ENCODE measurements at regions of chr3 and their contacts with region 1.

Region 1: DNA sequence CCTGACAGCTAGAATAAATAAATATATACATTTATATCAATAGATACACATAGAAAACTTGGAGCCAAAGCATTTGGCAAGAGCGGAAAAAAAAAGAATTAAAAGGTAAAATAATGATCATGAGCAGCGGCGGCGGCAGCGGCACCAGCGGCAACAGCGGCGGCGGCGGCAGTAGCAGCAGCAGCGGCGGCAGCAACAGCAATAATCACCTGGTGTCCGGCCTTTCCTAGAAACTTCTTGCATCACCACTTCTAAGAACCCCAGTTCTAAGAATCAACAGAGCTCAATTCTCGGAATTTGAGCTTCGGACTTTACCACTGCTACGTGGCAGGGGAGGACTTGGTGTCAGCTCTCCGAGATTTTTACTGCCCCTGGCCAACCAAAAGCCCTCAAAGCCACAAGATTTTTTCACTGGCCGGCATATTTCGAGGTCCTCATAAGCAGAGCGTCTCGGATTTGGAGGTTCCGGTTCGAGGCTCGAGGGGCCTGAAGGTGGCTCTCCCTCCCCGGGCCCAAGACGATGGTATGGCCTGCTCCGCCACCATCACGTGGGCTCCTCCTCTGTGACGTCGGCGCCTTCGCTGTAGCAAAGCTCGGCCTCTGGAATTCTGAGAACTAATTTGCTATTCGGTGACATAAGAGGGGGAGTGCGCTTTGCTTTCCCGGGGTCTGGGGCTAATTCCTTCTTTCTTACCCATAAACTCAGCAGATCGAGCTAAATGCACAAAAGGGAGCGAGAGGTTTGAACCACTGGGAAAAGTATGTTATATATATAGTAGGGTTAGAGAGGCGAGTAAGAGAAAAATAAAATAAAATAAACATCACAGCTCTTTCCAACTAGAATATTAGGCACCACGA is at the start of gene BCL6:
- DNase-seq: peak; percentile 95
- H3K4me3 ChIP-seq: peak within 1 kb of the TSS; percentile 50 to 88 (median 85)
- H3K27ac ChIP-seq: peak within 1 kb of the TSS; percentile 100
- H3K4me1 ChIP-seq: peaks cover 21% of the 10 kb centered on the region
- H3K27me3 ChIP-seq: no peaks in the 10 kb centered on the region
- CTCF ChIP-seq: no peak
- POLR2A ChIP-seq: peak; percentile 89
- total RNA-seq, gene BCL6: 9.6 and 12.1 TPM in 2 replicates

Region 2: DNA sequence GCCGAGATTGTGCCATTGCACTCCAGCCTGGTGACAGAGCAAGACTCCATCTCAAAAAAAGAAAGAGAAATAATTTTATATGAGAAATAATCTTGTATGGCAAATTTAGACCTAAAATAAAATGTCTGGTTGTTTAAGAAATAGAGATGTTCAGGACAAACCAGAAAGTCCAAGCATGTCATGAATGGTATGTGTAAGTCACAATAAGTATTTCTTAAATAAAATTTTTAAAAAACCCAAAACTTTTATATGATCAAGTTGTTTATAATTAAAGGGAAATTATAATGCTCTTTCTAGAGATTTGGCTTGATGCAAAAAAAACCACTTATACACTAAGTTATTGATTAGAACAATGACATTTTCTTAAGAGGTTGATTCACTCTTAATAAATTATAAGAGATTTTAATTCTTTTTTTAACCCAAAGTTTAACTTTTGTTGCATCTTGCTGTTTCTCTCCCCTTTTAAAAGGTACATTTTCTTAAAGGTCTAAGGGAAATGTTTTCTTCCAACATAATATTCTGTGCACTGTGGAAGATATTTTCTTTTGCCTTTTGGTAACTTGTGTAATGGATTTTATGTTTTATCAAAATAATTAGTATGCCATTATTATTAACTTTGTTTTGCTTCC is 271.5 kb before region 1 on chr3:
- CTCF ChIA-PET with region 1: no interaction called
- POLR2A ChIA-PET with region 1: no interaction called
- dilution Hi-C with region 1: no loop called
- intact Hi-C with region 1: no loop called
- DNase-seq: no peak
- H3K4me3 ChIP-seq: no peak overlapping the region
- H3K27ac ChIP-seq: no peak overlapping the region
- H3K4me1 ChIP-seq: no peaks in the 10 kb centered on the region
- H3K27me3 ChIP-seq: no peaks in the 10 kb centered on the region
- CTCF ChIP-seq: no peak
- POLR2A ChIP-seq: no peak

Region 3: GRCh38 chr3:188037216-188037718 is 291.8 kb after region 1 on chr3:
- CTCF ChIA-PET with region 1: no interaction called
- POLR2A ChIA-PET with region 1: no interaction called
- dilution Hi-C with region 1: no loop called
- intact Hi-C with region 1: loop called (anchors 2 kb)
- DNase-seq: peak; percentile 43
- H3K4me3 ChIP-seq: no peak overlapping the region
- H3K27ac ChIP-seq: no peak overlapping the region
- H3K4me1 ChIP-seq: no peaks in the 10 kb centered on the region
- H3K27me3 ChIP-seq: peaks cover 0 to 2% of the 10 kb centered on the region in 2 experiments
- CTCF ChIP-seq: peak in 1 of 2 donors; percentile 44
- POLR2A ChIP-seq: no peak

Region 4: DNA sequence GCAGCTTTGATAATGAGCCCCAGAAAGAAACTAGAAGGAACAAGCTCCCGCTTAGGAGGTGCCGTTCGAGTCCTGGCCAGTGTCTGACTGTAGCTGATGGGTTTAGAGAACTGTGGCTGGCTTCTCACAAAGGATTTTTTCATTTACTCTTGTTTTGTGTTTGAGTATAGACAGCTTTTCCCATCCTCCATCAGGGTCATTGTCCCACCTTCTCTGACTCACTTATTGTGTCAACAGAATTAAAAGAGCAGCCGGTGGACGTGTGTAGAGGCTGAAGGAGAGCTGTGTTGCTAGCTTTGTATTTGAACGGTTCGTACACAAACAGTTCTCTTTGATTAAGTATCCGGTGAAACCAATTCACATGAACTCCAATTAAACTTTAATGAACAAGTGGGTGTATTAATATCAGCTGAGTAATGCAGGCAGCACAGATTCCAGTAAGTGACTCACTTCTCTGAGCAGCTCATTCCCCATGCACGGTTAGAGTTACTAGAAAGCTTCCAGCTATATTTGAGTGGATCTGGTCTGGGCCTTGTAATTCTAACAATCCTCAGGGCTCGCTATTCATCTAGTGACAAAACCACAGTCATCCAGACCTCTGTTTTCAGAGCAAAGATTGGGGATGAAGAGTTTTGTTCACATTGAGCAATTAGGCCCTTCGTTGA is 549.5 kb after region 1 on chr3:
- CTCF ChIA-PET with region 1: interaction called, 10 read pairs
- POLR2A ChIA-PET with region 1: interaction called, 5 read pairs
- dilution Hi-C with region 1: no loop called
- intact Hi-C with region 1: loop called (anchors 2 kb)
- DNase-seq: peak; percentile 95
- H3K4me3 ChIP-seq: no peak overlapping the region
- H3K27ac ChIP-seq: peak overlapping the region; percentile 63
- H3K4me1 ChIP-seq: peaks cover 49% of the 10 kb centered on the region
- H3K27me3 ChIP-seq: no peaks in the 10 kb centered on the region
- CTCF ChIP-seq: no peak
- POLR2A ChIP-seq: no peak

Region 5: GRCh38 chr3:188546835-188547670 is 801.6 kb after region 1 on chr3:
- CTCF ChIA-PET with region 1: interaction called, 7 read pairs
- POLR2A ChIA-PET with region 1: no interaction called
- dilution Hi-C with region 1: no loop called
- intact Hi-C with region 1: loop called (anchors 1 kb)
- DNase-seq: peak; percentile 87
- H3K4me3 ChIP-seq: peak overlapping the region in 1 of 3 experiments; percentile 22
- H3K27ac ChIP-seq: peak overlapping the region; percentile 86
- H3K4me1 ChIP-seq: peaks cover 34% of the 10 kb centered on the region
- H3K27me3 ChIP-seq: no peaks in the 10 kb centered on the region
- CTCF ChIP-seq: no peak
- POLR2A ChIP-seq: no peak

Region 6: DNA sequence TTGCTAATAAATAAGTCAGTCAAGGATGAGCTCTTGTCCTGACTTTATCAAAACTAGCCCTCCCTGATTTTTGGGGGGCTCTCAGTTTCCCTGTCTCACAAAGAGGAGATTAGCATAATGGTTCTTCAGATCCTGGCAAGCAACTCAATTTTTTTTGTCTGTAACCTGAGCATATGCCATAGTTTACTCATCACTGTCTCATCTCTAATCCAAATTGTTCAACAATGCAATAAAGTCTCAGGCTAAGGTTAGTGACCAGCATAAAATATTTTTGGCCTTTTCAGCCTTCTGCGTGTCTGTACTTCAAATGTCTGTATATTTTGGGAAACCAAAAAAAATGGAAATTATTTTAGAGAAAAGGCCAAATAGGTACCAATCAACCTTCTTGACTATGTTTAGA is 960.7 kb after region 1 on chr3:
- CTCF ChIA-PET with region 1: interaction called, 9 read pairs
- POLR2A ChIA-PET with region 1: interaction called, 3 read pairs
- dilution Hi-C with region 1: no loop called
- intact Hi-C with region 1: loop called (anchors 2 kb)
- DNase-seq: no peak
- H3K4me3 ChIP-seq: no peak overlapping the region
- H3K27ac ChIP-seq: no peak overlapping the region
- H3K4me1 ChIP-seq: peaks cover 18% of the 10 kb centered on the region
- H3K27me3 ChIP-seq: no peaks in the 10 kb centered on the region
- CTCF ChIP-seq: no peak
- POLR2A ChIP-seq: no peak

Region 7: DNA sequence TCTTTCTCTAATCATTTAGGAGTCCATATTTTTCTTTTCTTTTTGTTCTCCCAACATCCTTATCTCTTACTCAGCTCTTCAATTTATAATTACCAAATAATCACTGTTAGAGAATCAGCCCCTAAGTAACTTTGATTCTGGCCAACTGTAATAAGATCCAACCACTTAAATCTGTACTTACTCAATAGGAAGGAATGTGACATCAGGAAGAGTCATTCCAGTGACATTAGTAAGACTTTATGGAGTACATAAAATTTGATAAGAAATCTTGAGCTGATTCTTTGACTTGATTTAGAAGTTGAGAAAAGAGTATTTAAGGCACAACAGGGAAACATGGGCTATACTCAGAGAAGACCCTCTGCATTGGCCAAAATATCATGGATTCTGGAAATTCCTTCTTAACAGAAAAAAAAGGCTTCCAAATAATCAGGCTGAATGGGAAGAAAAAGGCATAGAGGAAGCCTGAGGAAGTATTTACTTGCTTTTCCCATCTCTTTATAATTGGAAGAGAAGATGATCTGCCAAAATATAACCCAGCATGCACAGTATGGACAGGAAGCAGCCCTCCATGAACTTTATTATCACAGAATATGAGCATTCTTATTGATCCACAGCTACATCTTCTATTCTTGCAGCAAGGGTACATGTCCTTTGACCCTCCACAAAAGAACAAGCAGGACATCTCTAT is 1136.7 kb after region 1 on chr3:
- CTCF ChIA-PET with region 1: interaction called, 13 read pairs
- POLR2A ChIA-PET with region 1: no interaction called
- dilution Hi-C with region 1: no loop called
- intact Hi-C with region 1: no loop called
- DNase-seq: peak; percentile 70
- H3K4me3 ChIP-seq: no peak overlapping the region
- H3K27ac ChIP-seq: peak overlapping the region; percentile 74
- H3K4me1 ChIP-seq: peaks cover 37% of the 10 kb centered on the region
- H3K27me3 ChIP-seq: no peaks in the 10 kb centered on the region
- CTCF ChIP-seq: no peak
- POLR2A ChIP-seq: no peak

Region 8: DNA sequence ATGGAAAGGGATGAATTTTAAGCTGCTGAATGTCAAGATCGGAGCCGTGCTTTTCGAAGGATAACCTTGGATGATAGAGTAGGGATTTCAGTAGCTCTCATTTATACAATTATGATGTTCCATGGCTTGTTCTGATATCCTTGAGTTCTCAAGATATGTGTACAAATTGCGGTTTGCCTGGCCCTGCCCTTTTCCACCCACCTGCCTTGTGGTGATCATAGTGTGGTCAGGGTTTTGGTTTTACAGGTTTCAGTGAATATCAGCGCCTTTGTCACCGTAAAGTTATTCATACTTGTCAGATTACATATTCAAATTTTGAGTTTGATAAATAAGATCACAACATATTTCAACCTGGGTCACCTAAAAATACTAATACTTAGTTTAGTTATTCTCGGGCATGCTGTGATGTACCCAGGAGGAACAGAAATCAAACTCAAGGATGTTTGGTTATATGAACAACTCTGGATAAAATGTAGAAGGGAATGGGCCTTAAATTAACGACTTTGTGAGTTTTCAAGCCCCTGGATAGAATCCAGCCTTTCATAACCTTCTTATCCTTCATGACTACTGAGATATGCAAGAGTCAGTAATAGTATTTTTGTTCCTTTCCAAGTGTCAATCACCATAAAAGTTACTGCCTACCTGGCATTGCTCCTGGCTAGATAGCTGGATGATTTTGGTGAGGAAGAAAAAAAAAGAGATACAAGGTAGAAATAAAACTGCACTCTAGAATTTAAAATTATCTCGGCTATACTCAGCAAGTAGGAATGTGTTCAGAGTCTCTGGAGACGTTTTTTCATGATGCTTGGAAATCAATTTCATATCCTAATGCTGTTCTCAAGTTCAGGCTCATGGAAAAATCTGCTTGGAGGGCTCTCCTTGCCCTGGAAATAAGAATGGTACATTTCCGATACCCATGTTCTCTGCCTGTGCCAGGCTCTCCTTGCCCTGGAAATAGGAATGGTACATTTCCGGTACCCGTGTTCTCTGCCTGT is 1217.1 kb after region 1 on chr3:
- CTCF ChIA-PET with region 1: interaction called, 466 read pairs
- POLR2A ChIA-PET with region 1: no interaction called
- dilution Hi-C with region 1: no loop called
- intact Hi-C with region 1: no loop called
- DNase-seq: no peak
- H3K4me3 ChIP-seq: no peak overlapping the region
- H3K27ac ChIP-seq: no peak overlapping the region
- H3K4me1 ChIP-seq: no peaks in the 10 kb centered on the region
- H3K27me3 ChIP-seq: peaks cover 0 to 4% of the 10 kb centered on the region in 2 experiments
- CTCF ChIP-seq: no peak
- POLR2A ChIP-seq: no peak